Activated naive CD4-positive, alpha-beta T cell treated with anti-CD3 and anti-CD28 coated beads for 36 hours (primary cell): ENCODE measurements at regions of chr10 and their contacts with region 1.

Region 1: DNA sequence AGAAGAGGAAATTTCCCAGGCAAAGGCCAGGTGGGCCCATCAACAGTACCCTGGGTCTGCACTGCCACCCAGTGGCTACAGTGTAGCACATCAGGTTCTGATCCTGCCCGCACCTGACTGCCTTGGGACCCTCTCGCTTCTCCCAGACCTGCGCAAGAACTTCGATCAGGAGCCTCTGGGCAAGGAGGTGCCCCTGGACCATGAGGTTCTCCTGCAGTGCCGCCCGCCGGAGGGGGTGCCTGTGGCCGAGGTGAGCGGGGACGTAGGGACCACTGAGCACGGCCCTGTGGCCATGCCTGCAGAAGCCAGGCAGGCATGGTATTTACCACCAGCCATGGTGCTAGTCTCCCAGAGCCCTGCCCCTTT is 33.9 kb upstream of the SLC29A3 start:
- DNase-seq: peak; percentile 50
- H3K4me3 Mint-ChIP-seq: no peak overlapping the region
- H3K27ac Mint-ChIP-seq: no peak overlapping the region
- H3K4me1 Mint-ChIP-seq: no peaks in the 10 kb centered on the region
- H3K27me3 Mint-ChIP-seq: no peaks in the 10 kb centered on the region

Region 2: DNA sequence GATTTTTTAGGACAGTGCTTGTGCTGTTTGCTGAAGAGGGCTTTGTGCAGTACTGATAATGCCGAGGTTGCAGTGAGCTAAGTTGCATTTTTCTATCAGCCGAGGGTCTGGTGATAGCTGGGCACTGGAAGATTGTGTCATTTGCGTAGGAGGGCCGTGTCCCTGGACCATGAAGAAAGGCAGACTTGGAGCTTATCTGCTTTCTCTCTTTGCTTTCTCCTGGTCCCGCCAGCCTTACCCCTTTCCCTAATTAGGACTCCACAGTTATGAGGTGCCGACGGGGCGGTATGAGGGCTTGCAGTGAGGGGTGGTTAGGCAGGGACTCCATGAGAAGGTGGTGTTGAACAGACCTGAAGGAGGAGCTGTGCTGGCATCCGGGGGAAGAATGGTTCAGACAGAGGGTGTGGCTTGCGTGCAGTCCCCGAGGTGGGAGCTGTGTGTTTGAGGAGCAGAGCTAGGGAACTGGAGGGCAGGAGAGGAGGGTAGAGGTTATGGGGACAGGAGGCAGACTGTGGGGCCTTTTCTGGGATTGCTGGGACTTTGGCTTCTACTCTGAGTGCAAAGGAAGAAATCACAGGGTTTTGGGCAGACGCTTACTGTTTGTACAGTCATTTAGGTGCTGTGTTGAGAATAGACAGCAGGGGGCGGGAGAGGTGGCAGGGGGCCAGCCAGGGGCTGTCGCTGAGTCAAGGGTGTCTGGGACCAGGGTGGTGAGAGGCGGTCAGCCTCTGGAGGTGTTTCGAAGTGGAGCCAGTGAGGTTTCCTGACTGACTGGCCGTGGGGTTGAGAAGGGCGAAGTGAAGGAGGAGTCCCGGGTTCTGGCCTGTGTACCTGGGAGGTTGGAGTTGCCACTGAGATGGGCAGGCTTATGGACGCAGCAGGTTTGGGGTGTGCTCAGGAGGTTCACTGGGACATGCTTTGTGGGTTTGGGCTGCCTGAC is 726.0 kb before region 1 on chr10:
- CTCF ChIA-PET with region 1: no interaction called
- intact Hi-C with region 1: loop called (anchors 5 kb)
- DNase-seq: peak; percentile 81
- H3K4me3 Mint-ChIP-seq: peak overlapping the region; percentile 69
- H3K27ac Mint-ChIP-seq: no peak overlapping the region
- H3K4me1 Mint-ChIP-seq: peaks cover 11% of the 10 kb centered on the region
- H3K27me3 Mint-ChIP-seq: no peaks in the 10 kb centered on the region

Region 3: GRCh38 chr10:70903262-70903921 is 381.8 kb before region 1 on chr10:
- CTCF ChIA-PET with region 1: interaction called, 10 read pairs
- intact Hi-C with region 1: loop called (anchors 1 kb)
- DNase-seq: peak; percentile 45
- H3K4me3 Mint-ChIP-seq: no peak overlapping the region
- H3K27ac Mint-ChIP-seq: no peak overlapping the region
- H3K4me1 Mint-ChIP-seq: no peaks in the 10 kb centered on the region
- H3K27me3 Mint-ChIP-seq: no peaks in the 10 kb centered on the region